Endothelial cell of umbilical vein (primary cell): ENCODE measurements at regions of chr11 and their contacts with region 1.

Region 1: DNA sequence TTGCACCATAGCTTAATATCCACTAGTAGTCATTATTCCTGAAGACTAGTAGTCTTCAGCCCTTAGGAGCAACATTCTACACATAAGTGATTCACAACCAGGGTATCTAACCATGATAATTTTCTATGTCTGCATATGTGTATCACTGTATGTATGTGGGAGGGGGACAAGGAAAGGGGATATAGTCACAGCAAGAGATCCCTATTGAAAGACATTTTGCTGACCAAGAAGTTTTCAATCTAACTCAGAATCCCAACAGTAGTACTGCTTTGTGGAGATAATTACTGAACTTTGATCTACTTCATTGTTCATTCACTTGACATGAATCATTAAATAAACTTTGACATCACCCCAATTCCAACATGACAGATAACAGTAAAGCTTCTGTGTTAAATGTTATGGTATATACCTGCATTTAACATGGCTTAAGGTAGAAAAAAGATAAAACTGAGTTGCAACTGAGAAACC is 10.3 kb downstream of the PIK3C2A start:
- DNase-seq: peak; percentile 60
- H3K4me3 ChIP-seq: no peak overlapping the region
- H3K27ac ChIP-seq: no peak overlapping the region
- H3K4me1 ChIP-seq: peaks cover 13% of the 10 kb centered on the region
- H3K27me3 ChIP-seq: no peaks in the 10 kb centered on the region
- CTCF ChIP-seq: no peak
- POLR2A ChIP-seq: no peak

Region 2: GRCh38 chr11:17185938-17186337 is 11.5 kb before region 1 on chr11:
- CTCF ChIA-PET with region 1: no interaction called
- POLR2A ChIA-PET with region 1: no interaction called
- dilution Hi-C with region 1: no loop called
- intact Hi-C with region 1: loop called (anchors 2 kb)
- DNase-seq: no peak
- H3K4me3 ChIP-seq: no peak overlapping the region
- H3K27ac ChIP-seq: no peak overlapping the region
- H3K4me1 ChIP-seq: no peaks in the 10 kb centered on the region
- H3K27me3 ChIP-seq: no peaks in the 10 kb centered on the region
- CTCF ChIP-seq: no peak
- POLR2A ChIP-seq: no peak

Region 3: DNA sequence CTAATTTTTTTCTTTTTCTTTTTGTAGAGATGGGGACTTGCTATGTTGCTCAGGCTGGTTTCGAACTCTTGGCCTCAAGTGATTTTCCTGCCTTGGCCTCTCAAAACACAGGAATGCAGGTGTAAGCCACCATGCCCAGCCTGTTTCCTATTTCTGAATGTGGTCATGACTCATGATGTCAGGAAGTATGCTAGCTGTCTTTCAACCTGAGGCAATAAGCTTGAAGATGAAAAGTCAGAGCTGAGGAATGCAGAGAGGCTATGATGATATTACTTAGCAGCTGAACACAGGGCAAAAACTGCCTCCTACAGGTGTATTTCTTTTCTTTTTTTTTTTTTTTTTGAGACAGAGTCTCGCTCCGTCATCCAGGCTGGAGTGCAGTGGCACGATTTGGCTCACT is 70.1 kb after region 1 on chr11:
- CTCF ChIA-PET with region 1: no interaction called
- POLR2A ChIA-PET with region 1: no interaction called
- dilution Hi-C with region 1: no loop called
- intact Hi-C with region 1: no loop called
- DNase-seq: peak; percentile 40
- H3K4me3 ChIP-seq: no peak overlapping the region
- H3K27ac ChIP-seq: no peak overlapping the region
- H3K4me1 ChIP-seq: no peaks in the 10 kb centered on the region
- H3K27me3 ChIP-seq: no peaks in the 10 kb centered on the region
- CTCF ChIP-seq: no peak
- POLR2A ChIP-seq: no peak